AG04449 (cell line): ENCODE measurements at regions of chr6 and their contacts with region 1.

Region 1: GRCh38 chr6:10954590-10955010 is 67.7 kb downstream of the SYCP2L start:
- DNase-seq: peak; percentile 36
- H3K4me3 ChIP-seq: no peak overlapping the region
- CTCF ChIP-seq: peak; percentile 95

Region 2: DNA sequence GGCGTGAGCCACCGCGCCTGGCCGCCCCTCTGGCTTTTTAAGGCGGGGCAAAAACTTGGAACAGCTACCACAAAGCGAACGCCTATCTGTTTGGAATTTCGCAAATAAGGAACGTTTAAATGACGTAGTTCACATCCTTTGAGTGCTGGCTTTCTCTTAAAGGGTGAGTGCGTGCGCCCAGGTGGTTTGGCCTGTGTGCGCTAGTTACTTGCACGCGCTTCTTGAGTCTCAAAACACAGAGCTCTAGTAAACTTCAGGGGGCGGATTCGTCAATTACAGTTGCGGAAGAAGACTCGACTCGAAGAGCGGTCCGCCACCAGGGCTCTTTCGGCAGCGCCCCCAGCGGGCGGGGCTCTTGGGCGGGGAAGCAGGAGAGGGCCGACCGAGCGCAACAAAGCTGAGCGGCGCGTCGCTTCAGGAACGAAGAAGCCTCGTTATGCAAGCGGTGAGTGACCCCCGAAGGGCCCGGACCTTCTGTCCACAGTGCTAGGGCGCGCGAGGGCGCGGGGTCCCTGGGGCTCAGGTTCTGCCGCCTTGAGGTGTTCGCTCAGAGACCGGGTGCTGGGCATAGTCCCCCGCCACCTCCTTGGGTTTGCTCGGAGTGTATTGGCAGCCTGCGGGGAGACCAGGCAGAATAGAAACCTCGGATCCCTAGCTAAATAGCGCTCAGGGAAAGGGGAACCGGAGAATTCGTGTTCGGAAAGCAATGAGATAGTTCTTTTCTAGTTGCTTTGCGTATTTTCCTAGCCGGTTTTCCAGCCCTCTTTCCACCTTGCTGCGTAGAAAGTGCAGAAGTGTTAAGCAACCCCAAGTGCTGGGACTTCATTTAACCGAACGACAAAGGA is 67.7 kb before region 1 on chr6 and contains the start of gene SYCP2L:
- CTCF ChIA-PET with region 1: no interaction called
- POLR2A ChIA-PET with region 1: no interaction called
- DNase-seq: no peak
- H3K4me3 ChIP-seq: peak within 1 kb of the TSS; percentile 45
- CTCF ChIP-seq: no peak

Region 3: DNA sequence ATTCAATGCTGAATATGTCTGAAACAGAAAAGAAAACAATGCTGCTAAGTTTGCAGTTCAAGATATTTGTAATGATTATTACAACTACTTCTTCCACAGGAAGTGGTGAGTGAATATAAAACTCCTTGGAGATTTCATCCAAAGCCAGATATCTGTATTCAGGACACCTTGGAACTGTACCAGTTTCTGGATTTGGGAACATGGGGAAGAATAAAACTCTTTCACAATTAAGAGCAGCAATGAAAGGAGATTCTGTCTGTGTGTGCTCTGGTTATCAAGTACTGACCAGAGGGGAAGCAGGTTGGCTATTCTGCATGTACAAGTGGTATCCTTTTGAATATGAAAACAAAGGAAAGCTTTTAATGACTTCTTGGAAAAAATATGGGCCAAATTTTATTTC is 68.4 kb after region 1 on chr6:
- CTCF ChIA-PET with region 1: interaction called, 10 read pairs
- POLR2A ChIA-PET with region 1: no interaction called
- DNase-seq: no peak
- H3K4me3 ChIP-seq: no peak overlapping the region
- CTCF ChIP-seq: no peak

Region 4: DNA sequence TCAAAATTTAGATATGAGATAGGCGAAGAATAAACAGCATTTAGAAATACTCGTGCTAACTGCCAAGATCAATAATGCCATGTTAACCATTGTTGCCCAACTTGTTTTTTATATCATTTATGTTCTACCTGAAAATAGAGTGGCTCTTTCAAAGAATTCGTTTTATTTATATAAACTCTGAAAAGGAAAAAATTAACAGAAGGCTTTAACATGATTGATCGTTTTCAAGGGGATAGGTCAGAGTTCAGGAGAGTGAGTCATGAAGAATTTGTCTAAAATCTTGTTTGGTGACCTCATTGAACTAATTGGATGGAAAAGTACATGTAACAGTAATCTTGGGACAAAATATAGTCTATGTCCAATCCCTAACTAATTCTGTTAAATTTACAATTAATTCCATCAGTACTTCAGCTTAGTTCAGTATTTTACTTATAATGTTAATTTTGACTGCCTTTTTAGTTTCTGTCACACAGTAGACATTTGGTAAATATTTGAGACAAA is 100.6 kb after region 1 on chr6:
- CTCF ChIA-PET with region 1: interaction called, 40 read pairs
- POLR2A ChIA-PET with region 1: no interaction called
- DNase-seq: no peak
- H3K4me3 ChIP-seq: no peak overlapping the region
- CTCF ChIP-seq: no peak

Region 5: GRCh38 chr6:11094411-11094851 is 139.8 kb after region 1 on chr6:
- CTCF ChIA-PET with region 1: interaction called, 10 read pairs
- POLR2A ChIA-PET with region 1: interaction called, 3 read pairs
- DNase-seq: no peak
- H3K4me3 ChIP-seq: peak overlapping the region; percentile 100
- CTCF ChIP-seq: no peak

Region 6: GRCh38 chr6:11585426-11586016 is 630.9 kb after region 1 on chr6:
- CTCF ChIA-PET with region 1: interaction called, 13 read pairs
- POLR2A ChIA-PET with region 1: no interaction called
- DNase-seq: no peak
- H3K4me3 ChIP-seq: no peak overlapping the region
- CTCF ChIP-seq: peak; percentile 50